ENCODE measurements at regions of chr9 and their contacts with region 1.

Region 1: DNA sequence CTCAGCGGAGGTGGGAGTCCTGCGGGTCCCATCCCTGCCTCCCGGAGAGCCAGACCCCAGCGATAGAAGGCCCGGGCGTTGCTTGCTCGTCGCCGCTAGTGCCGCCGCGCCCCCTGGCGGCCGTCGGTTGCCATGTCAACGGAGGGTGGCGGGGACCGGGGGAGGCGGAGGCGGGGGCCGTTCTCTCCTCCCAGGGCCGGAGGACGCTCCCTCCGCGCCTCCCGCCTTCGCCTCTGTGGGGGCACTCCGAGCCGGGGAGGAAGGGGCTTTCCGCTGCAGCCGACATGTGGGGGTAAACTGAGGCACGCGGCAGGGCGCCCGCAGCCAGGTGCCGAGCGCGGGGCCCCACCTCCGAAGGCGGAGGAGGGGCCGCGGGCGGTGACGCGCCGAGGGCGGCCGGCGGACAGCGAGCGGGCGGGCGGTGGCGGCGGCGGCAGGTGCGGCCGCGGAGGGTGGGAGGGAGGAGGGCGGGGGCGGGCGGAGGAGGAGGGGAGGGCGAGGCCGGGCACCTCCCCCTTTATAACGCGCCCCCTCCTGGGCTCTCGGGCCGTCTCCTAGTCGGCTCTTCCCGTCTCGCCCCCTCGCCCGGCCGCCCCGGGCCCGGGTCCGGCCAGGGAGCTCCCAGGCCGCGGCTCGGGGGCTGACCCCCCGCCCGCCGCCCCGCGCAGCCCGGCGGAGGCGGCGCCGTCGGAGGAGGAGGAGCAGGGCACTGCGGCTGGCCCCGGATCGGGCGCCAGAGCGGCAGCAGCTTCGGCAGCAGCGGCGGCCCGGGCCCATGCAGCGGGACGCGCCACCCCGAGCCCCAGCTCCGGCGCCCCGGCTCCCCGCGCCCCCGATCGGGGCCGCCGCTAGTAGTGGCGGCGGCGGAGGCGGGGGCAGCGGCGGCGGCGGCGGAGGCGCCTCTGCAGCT is 556 bp upstream of the CDK9 start:
- DNase-seq: peak; percentile 89 to 95 (median 90)
- ATAC-seq: peak; percentile 25 to 71 (median 64)
- H3K4me3 ChIP-seq: peak overlapping the region; percentile 76 to 100 (median 98)
- H3K27ac ChIP-seq: peak overlapping the region; percentile 88 to 100 (median 96)
- H3K4me1 ChIP-seq: peaks cover 0 to 78% (median 45%) of the 10 kb centered on the region in 12 donors
- H3K27me3 ChIP-seq: no peaks in the 10 kb centered on the region
- CTCF ChIP-seq: peak; percentile 77 to 97 (median 91)
- POLR2A ChIP-seq: no peak

Region 2: DNA sequence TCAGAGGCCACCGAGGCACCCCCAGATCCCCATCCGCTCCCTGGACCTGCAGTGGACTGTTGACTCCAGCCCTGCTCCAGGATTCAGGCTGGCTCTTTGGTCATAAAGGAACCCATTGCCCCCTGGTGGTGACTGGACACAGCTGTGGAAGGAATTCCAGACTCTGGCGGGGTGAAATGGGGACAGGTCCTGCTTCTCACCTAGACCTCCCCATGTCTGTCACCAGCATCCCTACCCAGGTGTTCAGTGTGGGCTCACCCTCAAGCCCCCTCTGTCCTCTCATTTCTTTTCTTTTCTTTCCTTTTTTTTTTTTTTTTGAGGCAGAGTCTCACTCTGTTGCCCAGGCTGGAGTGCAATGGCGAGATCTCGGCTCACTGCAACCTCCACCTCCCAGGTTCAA is 198.7 kb before region 1 on chr9:
- intact Hi-C with region 1: loop called in 4 of 10 experiments (anchors 1 to 5 kb)
- DNase-seq: peak; percentile 81 to 90 (median 83)
- ATAC-seq: peak; percentile 82 to 94 (median 92)
- H3K4me3 ChIP-seq: no peak overlapping the region
- H3K27ac ChIP-seq: no peak overlapping the region
- H3K4me1 ChIP-seq: peaks cover 0 to 6% (median 0%) of the 10 kb centered on the region in 12 donors
- H3K27me3 ChIP-seq: no peaks in the 10 kb centered on the region
- CTCF ChIP-seq: peak; percentile 80 to 91 (median 86)
- POLR2A ChIP-seq: no peak

Region 3: DNA sequence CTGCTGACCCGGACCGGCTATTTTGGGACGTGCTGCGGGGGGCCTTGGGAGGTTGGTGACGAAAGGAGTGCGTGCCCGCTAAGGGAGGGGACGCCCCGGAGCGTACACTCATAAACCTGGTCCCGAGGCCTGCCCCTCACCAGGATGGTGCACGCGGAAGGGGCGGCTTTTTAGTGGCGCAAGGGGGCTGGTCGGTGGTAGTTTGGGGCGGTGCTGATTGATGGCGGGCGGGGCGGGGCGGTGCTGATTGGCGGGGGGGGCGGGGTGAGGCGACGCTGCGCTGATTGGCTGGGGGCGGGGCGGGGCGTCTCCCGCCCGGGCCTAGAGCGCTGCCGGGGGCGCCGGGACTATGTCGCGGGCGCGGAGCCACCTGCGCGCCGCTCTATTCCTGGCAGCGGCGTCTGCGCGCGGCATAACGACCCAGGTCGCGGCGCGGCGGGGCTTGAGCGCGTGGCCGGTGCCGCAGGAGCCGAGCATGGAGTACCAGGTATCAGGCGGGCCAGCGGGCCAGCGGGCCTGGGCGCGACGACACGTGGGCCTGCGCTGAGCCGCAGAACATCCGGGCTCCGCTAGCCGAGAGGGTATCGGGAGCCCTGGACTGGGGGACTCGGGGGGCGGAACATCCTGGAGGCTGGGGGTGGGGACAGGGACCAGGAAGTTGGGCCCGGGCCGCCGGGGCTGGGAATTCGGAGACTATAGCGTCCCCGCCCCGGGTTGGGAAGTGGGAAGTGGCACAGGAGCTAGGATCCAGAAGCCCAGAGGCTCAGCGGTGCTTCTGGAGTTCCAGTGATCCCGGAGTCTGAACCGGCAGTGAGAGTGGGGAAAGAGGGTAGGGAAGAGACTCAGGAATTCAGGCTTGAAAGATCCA is 17.5 kb after region 1 on chr9 and contains the start of gene FPGS:
- intact Hi-C with region 1: loop called in 1 of 10 experiments (anchors 2 kb)
- DNase-seq: peak; percentile 92 to 95 (median 93)
- ATAC-seq: peak; percentile 80 to 94 (median 92)
- H3K4me3 ChIP-seq: peak within 1 kb of the TSS; percentile 51 to 87 (median 76)
- H3K27ac ChIP-seq: peak within 1 kb of the TSS; percentile 86 to 97 (median 95)
- H3K4me1 ChIP-seq: peaks cover 5 to 32% (median 19%) of the 10 kb centered on the region in 12 donors
- H3K27me3 ChIP-seq: no peaks in the 10 kb centered on the region
- CTCF ChIP-seq: no peak
- POLR2A ChIP-seq: peak in 1 of 2 donors; percentile 53
- total RNA-seq, gene FPGS: 39.9 to 55.1 (median 41.5) TPM

Region 4: DNA sequence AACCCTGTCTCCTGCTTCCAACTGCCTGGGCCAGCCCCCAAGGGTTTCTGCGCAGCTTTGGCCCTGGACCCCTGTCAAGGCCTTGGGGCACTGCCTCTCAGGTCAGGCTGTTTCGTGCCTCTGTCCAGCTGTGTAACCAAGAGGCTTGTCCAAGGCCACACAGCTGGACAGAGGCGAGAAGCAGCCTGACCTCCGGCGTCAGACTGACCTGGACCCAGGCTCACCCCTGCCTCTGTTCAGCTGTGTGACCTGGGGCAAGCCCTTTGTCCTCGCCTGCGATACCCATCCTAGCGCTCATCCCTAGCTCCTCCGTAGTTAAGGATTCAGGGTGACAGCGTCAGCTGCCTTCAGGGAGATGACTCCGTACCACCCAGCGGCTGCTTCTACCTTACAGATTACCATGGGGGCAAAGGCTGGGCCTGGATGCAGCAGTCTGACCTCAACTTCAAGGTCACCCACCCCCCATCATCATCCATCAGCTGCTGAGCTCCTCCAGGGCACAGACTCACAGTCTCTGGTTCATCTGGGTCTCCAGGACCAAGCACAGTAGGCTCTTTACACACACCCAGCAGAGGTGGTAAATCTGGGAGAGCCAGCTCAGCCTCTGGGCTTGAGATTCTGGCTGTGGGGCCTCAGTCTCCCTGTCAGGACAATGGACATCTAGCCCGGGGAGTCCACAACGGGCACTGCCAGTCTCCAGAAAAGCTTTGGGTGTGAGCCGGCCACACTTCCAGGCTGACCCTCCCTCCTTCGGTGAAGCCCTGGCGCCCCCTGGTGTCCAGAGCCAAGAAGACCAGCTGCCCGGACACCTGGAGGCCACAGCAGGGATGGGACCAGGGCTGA is 84.3 kb after region 1 on chr9:
- intact Hi-C with region 1: loop called in 9 of 10 experiments (anchors 2 to 5 kb)
- DNase-seq: peak; percentile 90 to 96 (median 91)
- ATAC-seq: peak; percentile 64 to 80 (median 68)
- H3K4me3 ChIP-seq: no peak overlapping the region
- H3K27ac ChIP-seq: peak overlapping the region in 10 of 12 donors; percentile 27 to 88 (median 58)
- H3K4me1 ChIP-seq: peaks cover 0 to 55% (median 37%) of the 10 kb centered on the region in 12 donors
- H3K27me3 ChIP-seq: no peaks in the 10 kb centered on the region
- CTCF ChIP-seq: peak; percentile 85 to 94 (median 88)
- POLR2A ChIP-seq: no peak

Measured in heart left ventricle (tissue), 16 donors.